ENCODE measurements at regions of chr12 and their contacts with region 1.

Region 1: DNA sequence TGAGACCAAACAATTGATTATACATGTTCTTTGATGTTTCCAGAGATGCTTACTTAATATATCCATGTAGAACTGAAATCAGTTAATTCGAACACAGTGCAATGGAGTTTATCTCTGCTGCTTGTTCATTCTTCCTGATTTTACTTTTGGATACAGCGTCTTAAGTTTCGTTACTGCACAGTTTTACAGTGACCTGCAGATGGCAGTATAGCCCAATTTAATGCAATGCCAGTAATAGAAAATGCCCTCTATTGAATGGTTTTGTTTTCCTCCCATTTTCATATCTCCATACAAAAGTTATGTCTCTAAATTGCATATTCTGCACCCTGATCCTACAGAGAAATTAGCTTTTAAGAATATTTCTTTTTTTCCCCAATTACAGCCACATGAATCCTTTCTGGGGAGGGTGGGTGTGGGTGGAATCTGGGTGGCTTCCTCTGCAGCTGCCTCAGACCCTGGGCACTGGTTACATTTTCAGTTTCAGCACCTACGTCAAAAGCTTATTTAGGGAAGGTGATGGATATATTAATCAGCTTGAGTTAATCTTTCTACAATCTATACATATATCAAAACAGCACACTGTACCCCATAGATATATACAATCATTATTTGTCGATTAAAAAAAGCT is 101.1 kb upstream of the DCD start:
- DNase-seq: peak; percentile 41 to 65 (median 59)
- H3K4me3 ChIP-seq: no peak overlapping the region
- H3K4me3 Mint-ChIP-seq: peak overlapping the region in 7 of 8 donors; percentile 50 to 73 (median 68)
- H3K27ac ChIP-seq: no peak overlapping the region
- H3K27ac Mint-ChIP-seq: peak overlapping the region in 2 of 7 donors; percentile 48 to 63
- H3K4me1 ChIP-seq: peaks cover 18% of the 10 kb centered on the region
- H3K4me1 Mint-ChIP-seq: peaks cover 13 to 40% (median 21%) of the 10 kb centered on the region in 4 donors
- H3K27me3 ChIP-seq: no peaks in the 10 kb centered on the region
- H3K27me3 Mint-ChIP-seq: no peaks in the 10 kb centered on the region

Region 2: GRCh38 chr12:54723379-54724256 is 25.7 kb before region 1 on chr12:
- CTCF ChIA-PET with region 1: interaction called, 17 read pairs
- POLR2A ChIA-PET with region 1: no interaction called
- intact Hi-C with region 1: loop called (anchors 2 kb)
- DNase-seq: peak; percentile 38 to 54 (median 44)
- H3K4me3 ChIP-seq: no peak overlapping the region
- H3K4me3 Mint-ChIP-seq: no peak overlapping the region
- H3K27ac ChIP-seq: no peak overlapping the region
- H3K27ac Mint-ChIP-seq: no peak overlapping the region
- H3K4me1 ChIP-seq: peaks cover 4% of the 10 kb centered on the region
- H3K4me1 Mint-ChIP-seq: peaks cover 5 to 32% (median 12%) of the 10 kb centered on the region in 4 donors
- H3K27me3 ChIP-seq: no peaks in the 10 kb centered on the region
- H3K27me3 Mint-ChIP-seq: peaks cover 7 to 10% of the 10 kb centered on the region in 2 donors

Region 3: GRCh38 chr12:54759751-54760150 is 10.4 kb after region 1 on chr12:
- CTCF ChIA-PET with region 1: interaction called, 13 read pairs
- POLR2A ChIA-PET with region 1: no interaction called
- intact Hi-C with region 1: no loop called
- DNase-seq: peak in 1 of 5 donors; percentile 23
- H3K4me3 ChIP-seq: no peak overlapping the region
- H3K4me3 Mint-ChIP-seq: no peak overlapping the region
- H3K27ac ChIP-seq: no peak overlapping the region
- H3K27ac Mint-ChIP-seq: no peak overlapping the region
- H3K4me1 ChIP-seq: peaks cover 3% of the 10 kb centered on the region
- H3K4me1 Mint-ChIP-seq: peaks cover 0 to 6% (median under 1%) of the 10 kb centered on the region in 4 donors
- H3K27me3 ChIP-seq: no peaks in the 10 kb centered on the region
- H3K27me3 Mint-ChIP-seq: peaks cover 0 to 7% of the 10 kb centered on the region in 2 donors

Region 4: GRCh38 chr12:54891717-54892554 is 142.6 kb after region 1 on chr12:
- CTCF ChIA-PET with region 1: no interaction called
- POLR2A ChIA-PET with region 1: no interaction called
- intact Hi-C with region 1: no loop called
- DNase-seq: no peak
- H3K4me3 ChIP-seq: no peak overlapping the region
- H3K4me3 Mint-ChIP-seq: no peak overlapping the region
- H3K27ac ChIP-seq: no peak overlapping the region
- H3K27ac Mint-ChIP-seq: no peak overlapping the region
- H3K4me1 ChIP-seq: no peaks in the 10 kb centered on the region
- H3K4me1 Mint-ChIP-seq: no peaks in the 10 kb centered on the region
- H3K27me3 ChIP-seq: no peaks in the 10 kb centered on the region
- H3K27me3 Mint-ChIP-seq: peaks cover 6 to 8% of the 10 kb centered on the region in 2 donors

Region 5: DNA sequence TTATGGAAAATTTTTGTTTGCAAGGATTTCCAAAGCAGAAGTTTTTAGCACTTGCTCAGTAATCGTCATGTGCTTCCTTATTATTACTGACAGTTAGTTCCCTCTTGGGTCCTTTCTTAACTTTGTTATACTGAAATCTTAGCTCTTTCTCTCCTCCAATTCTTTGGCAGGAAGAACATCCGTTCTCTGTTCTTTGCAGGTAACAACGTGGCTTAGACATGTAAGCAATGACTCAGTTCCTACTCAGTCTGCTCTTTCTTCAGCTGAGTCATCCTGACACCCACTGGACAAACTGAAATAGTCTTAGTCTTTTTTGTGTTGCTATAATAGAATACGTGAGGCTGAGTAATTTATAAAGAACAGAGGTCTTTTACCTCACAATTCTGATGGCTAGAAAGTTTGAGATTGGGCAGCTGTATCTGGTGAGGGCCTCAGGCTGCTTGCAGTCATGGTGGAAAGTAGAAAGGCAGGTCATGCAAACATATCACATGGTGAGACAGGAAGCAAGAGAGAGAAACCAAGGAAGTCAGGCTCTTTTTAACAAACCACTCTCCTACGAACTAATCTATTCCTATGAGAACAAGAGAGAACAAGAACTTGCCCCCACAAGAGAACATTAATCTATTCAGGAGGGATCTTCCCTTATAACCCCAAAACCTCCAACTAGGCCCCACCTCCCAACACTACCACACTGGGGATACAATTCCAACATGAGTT is 186.1 kb after region 1 on chr12:
- CTCF ChIA-PET with region 1: interaction called, 32 read pairs
- POLR2A ChIA-PET with region 1: interaction called, 7 read pairs
- intact Hi-C with region 1: loop called (anchors 2 kb)
- DNase-seq: peak; percentile 53 to 71 (median 60)
- H3K4me3 ChIP-seq: no peak overlapping the region
- H3K4me3 Mint-ChIP-seq: peak overlapping the region in 7 of 8 donors; percentile 42 to 85 (median 74)
- H3K27ac ChIP-seq: peak overlapping the region; percentile 35
- H3K27ac Mint-ChIP-seq: peak overlapping the region; percentile 80 to 96 (median 91)
- H3K4me1 ChIP-seq: peaks cover 45% of the 10 kb centered on the region
- H3K4me1 Mint-ChIP-seq: peaks cover 33 to 53% (median 44%) of the 10 kb centered on the region in 4 donors
- H3K27me3 ChIP-seq: no peaks in the 10 kb centered on the region
- H3K27me3 Mint-ChIP-seq: no peaks in the 10 kb centered on the region

Region 6: GRCh38 chr12:54967461-54967860 is 218.2 kb after region 1 on chr12:
- CTCF ChIA-PET with region 1: interaction called, 98 read pairs
- POLR2A ChIA-PET with region 1: no interaction called
- intact Hi-C with region 1: no loop called
- DNase-seq: peak in 1 of 5 donors; percentile 59
- H3K4me3 ChIP-seq: no peak overlapping the region
- H3K4me3 Mint-ChIP-seq: peak overlapping the region in 7 of 8 donors; percentile 56 to 84 (median 80)
- H3K27ac ChIP-seq: peak overlapping the region; percentile 46
- H3K27ac Mint-ChIP-seq: peak overlapping the region; percentile 58 to 94 (median 87)
- H3K4me1 ChIP-seq: peaks cover 74% of the 10 kb centered on the region
- H3K4me1 Mint-ChIP-seq: peaks cover 59 to 91% (median 79%) of the 10 kb centered on the region in 4 donors
- H3K27me3 ChIP-seq: no peaks in the 10 kb centered on the region
- H3K27me3 Mint-ChIP-seq: no peaks in the 10 kb centered on the region

Region 7: GRCh38 chr12:55142669-55143565 is 393.6 kb after region 1 on chr12:
- CTCF ChIA-PET with region 1: interaction called, 10 read pairs
- POLR2A ChIA-PET with region 1: no interaction called
- intact Hi-C with region 1: loop called (anchors 1 kb)
- DNase-seq: peak in 4 of 5 donors; percentile 17 to 33 (median 26)
- H3K4me3 ChIP-seq: no peak overlapping the region
- H3K4me3 Mint-ChIP-seq: no peak overlapping the region
- H3K27ac ChIP-seq: no peak overlapping the region
- H3K27ac Mint-ChIP-seq: no peak overlapping the region
- H3K4me1 ChIP-seq: no peaks in the 10 kb centered on the region
- H3K4me1 Mint-ChIP-seq: peaks cover 0 to 5% (median 2%) of the 10 kb centered on the region in 4 donors
- H3K27me3 ChIP-seq: no peaks in the 10 kb centered on the region
- H3K27me3 Mint-ChIP-seq: peaks cover 5 to 6% of the 10 kb centered on the region in 2 donors